IMR-90 (cell line): ENCODE measurements at regions of chr2 and their contacts with region 1.

Region 1: DNA sequence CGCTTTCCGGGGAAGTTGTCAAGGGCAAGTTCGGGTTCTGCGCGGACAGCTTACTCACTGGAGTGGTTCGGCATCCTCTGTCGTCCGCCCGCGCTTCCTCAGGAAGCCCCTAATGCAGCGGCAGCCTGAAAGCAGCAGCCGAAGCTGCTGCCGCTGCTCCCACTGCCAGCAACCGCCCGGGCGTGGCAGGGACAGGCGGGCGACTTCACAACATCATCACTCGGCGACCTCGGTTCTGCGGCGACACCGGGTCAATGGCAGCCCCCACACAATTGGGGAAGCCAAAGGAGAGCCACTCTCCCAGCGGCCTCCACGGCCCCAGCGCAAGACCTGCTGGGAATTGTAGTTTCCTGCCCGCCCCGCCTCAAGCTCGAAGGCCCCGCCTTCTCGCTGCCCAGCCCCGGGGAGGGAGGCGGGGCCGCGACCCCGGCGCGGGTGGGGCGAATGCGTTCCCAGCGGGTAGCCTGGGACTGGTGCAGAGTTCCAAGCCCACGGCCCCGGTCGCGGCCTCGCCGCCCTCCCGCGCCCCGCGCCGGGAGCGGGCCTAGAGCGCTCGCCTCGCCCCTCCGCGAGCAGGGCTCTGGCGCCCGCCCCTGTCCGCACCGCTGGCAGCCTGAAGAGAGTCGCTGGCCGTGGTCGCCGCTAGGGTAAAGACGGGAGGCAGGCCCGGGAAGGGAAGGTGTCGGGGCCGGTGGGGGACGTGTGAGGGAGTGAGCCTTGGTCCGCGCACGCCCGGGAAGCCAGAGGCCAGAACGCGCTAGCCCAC is at the starts of genes STRADB and TRAK2:
- DNase-seq: peak; percentile 92
- ATAC-seq: peak; percentile 97
- H3K4me3 ChIP-seq: peak within 1 kb of the TSS; percentile 82
- H3K27ac ChIP-seq: peak within 1 kb of the TSS; percentile 80
- H3K4me1 ChIP-seq: peaks cover 2% of the 10 kb centered on the region; the same call in 1 of the 2 replicates
- H3K27me3 ChIP-seq: no peaks in the 10 kb centered on the region
- CTCF ChIP-seq: peak; percentile 30; the same call in 1 of the 2 replicates
- POLR2A ChIP-seq: peak; percentile 70; the same call in 1 of the 2 replicates
- RAD21 ChIP-seq: no peak
- total RNA-seq, gene STRADB: 31.5 and 32.5 TPM in 2 replicates
- total RNA-seq, gene TRAK2: 48.9 and 65.4 TPM in 2 replicates

Region 2: GRCh38 chr2:200509612-200510433 is 941.7 kb before region 1 on chr2 and contains the start of gene KCTD18:
- CTCF ChIA-PET with region 1: no interaction called
- POLR2A ChIA-PET with region 1: no interaction called
- dilution Hi-C with region 1: no loop called
- in situ Hi-C with region 1: no loop called
- intact Hi-C with region 1: no loop called
- DNase-seq: peak; percentile 80
- ATAC-seq: peak; percentile 99
- H3K4me3 ChIP-seq: peak within 1 kb of the TSS; percentile 86
- H3K27ac ChIP-seq: peak within 1 kb of the TSS; percentile 75
- H3K4me1 ChIP-seq: 0 out of 2 replicates have a peak, but pooled peaks cover 2% of the 10 kb centered on the region
- H3K27me3 ChIP-seq: peaks cover 13% of the 10 kb centered on the region
- CTCF ChIP-seq: peak; percentile 93
- POLR2A ChIP-seq: peak; percentile 64
- RAD21 ChIP-seq: peak; percentile 63
- total RNA-seq, gene KCTD18: 10.4 and 12.8 TPM in 2 replicates

Region 3: GRCh38 chr2:201470821-201471731 is 19.6 kb after region 1 on chr2:
- CTCF ChIA-PET with region 1: interaction called, 4 read pairs
- POLR2A ChIA-PET with region 1: interaction called, 11 read pairs
- dilution Hi-C with region 1: no loop called
- in situ Hi-C with region 1: no loop called
- intact Hi-C with region 1: no loop called
- DNase-seq: peak; percentile 69
- ATAC-seq: peak; percentile 58
- H3K4me3 ChIP-seq: no peak overlapping the region
- H3K27ac ChIP-seq: no peak overlapping the region
- H3K4me1 ChIP-seq: peaks cover 13% of the 10 kb centered on the region
- H3K27me3 ChIP-seq: no peaks in the 10 kb centered on the region
- CTCF ChIP-seq: no peak
- POLR2A ChIP-seq: no peak
- RAD21 ChIP-seq: no peak

Region 4: DNA sequence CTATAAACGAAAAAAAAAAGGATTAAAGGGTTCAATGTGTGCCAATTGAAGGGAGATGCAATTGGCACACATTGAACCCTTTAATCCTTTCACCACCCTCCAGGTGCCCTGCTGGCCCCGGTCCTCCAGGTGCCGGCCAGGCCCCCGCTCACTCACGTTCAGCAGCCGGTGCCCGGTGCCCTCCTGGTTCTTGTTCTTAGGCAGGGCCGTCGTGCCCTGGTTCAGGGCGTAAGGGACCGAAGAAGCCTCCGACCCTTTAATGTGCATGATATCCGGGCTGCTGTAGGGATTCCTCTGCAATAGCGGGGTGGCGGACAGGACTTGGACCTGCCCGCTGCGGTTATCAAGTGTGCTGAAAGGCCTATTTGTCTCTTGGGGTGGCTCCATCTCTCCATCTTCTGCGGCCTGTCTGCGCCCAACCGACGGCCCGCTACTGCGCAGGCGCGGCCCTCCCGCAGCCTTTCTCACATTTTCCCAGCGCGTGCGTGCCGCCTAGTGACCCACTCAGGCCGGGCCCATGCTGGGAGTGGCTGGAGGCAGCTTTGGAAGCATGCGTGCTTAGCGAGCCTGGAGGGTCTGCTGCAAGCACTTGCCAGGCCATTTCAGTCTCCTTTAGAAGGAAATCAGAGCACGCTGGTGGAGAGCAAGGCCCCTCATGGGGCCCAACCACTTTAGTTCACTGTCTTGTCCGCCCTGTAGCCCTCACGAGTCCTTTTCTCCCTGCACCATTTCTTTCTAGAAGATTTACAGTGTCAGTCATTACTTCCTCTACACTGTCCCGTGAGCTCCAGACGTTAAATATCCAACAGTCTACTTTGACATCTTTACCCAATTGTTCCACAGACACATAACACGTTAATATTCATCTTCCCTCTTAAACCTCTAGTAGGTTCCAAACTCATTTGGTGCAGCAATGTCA is 167.5 kb after region 1 on chr2:
- CTCF ChIA-PET with region 1: no interaction called
- POLR2A ChIA-PET with region 1: no interaction called
- dilution Hi-C with region 1: no loop called
- in situ Hi-C with region 1: no loop called
- intact Hi-C with region 1: loop called (anchors 1 kb)
- DNase-seq: peak; percentile 50
- ATAC-seq: peak; percentile 96
- H3K4me3 ChIP-seq: no peak overlapping the region
- H3K27ac ChIP-seq: no peak overlapping the region
- H3K4me1 ChIP-seq: no peaks in the 10 kb centered on the region
- H3K27me3 ChIP-seq: no peaks in the 10 kb centered on the region
- CTCF ChIP-seq: peak; percentile 42
- POLR2A ChIP-seq: no peak
- RAD21 ChIP-seq: peak; percentile 56

Region 5: GRCh38 chr2:201696151-201696659 is 244.7 kb after region 1 on chr2:
- CTCF ChIA-PET with region 1: no interaction called
- POLR2A ChIA-PET with region 1: no interaction called
- dilution Hi-C with region 1: no loop called
- in situ Hi-C with region 1: no loop called
- intact Hi-C with region 1: loop called (anchors 5 kb)
- DNase-seq: peak; percentile 96
- ATAC-seq: peak; percentile 72
- H3K4me3 ChIP-seq: no peak overlapping the region
- H3K27ac ChIP-seq: peak overlapping the region; percentile 94
- H3K4me1 ChIP-seq: peaks cover 26% of the 10 kb centered on the region
- H3K27me3 ChIP-seq: no peaks in the 10 kb centered on the region
- CTCF ChIP-seq: no peak
- POLR2A ChIP-seq: no peak
- RAD21 ChIP-seq: no peak

Region 6: DNA sequence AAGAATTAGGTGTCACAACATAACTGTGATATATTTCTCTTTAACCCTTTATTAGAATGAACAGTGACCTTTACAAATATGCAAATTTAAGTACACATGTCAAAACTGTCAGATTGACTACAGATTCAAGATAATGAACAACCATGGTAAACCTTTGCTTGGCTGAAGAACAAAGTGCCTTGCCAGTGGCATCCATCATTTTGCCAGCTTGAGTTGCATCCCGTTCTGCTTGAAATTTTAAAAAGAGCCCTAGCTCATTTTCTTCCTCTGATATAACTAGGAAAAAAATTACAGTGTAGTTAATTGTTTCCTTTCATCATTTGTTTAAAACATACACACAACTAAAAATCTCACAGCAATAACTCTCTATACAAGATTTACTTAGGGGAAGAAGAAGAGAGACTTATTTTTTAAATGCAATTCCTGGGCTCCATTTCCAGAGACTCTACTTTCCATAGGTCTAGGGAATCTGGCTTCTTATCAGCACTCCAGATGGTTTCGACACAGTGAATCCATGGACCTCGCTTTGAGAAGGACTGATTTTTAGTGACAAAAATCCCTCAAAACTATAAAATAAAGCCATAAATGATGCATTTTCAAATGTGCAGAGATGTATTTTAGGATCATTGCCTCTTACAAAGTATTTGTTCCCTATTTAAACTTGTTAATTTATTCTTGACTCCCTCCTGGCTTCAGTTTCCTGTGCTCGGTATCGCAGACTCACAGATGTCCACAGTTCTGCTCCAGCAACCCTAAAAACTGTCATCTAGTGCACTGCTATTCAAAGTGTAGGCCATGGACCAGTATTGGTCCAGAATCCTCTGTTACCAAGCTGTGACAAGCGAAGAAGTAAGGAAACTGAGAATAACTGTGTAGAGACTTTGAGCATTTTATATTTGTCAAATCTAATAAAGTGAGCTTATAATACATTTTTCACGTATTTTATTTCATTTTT is 1370.0 kb after region 1 on chr2:
- CTCF ChIA-PET with region 1: no interaction called
- POLR2A ChIA-PET with region 1: interaction called, 23 read pairs
- dilution Hi-C with region 1: no loop called
- in situ Hi-C with region 1: no loop called
- intact Hi-C with region 1: no loop called
- DNase-seq: no peak
- ATAC-seq: no peak
- H3K4me3 ChIP-seq: no peak overlapping the region
- H3K27ac ChIP-seq: no peak overlapping the region
- H3K4me1 ChIP-seq: 0 out of 2 replicates have a peak, but pooled peaks cover 2% of the 10 kb centered on the region
- H3K27me3 ChIP-seq: no peaks in the 10 kb centered on the region
- CTCF ChIP-seq: no peak
- POLR2A ChIP-seq: no peak
- RAD21 ChIP-seq: no peak